ENCODE measurements at regions of chr5 and their contacts with region 1.

Region 1: GRCh38 chr5:80181618-80182211 is 74.1 kb downstream of the SERINC5 start:
- DNase-seq: peak; percentile 92 to 93
- H3K4me3 ChIP-seq: no peak overlapping the region
- H3K4me3 Mint-ChIP-seq: peak overlapping the region; percentile 66
- H3K27ac Mint-ChIP-seq: peak overlapping the region; percentile 92
- H3K4me1 ChIP-seq: peaks cover 76% of the 10 kb centered on the region
- H3K4me1 Mint-ChIP-seq: peaks cover 71% of the 10 kb centered on the region
- H3K27me3 ChIP-seq: no peaks in the 10 kb centered on the region
- H3K27me3 Mint-ChIP-seq: no peaks in the 10 kb centered on the region
- CTCF ChIP-seq: no peak

Region 2: GRCh38 chr5:80083101-80083890 is 98.4 kb before region 1 on chr5:
- CTCF ChIA-PET with region 1: no interaction called
- POLR2A ChIA-PET with region 1: interaction called, 11 read pairs
- intact Hi-C with region 1: no loop called
- DNase-seq: peak in 1 of 2 experiments; percentile 28
- H3K4me3 ChIP-seq: no peak overlapping the region
- H3K4me3 Mint-ChIP-seq: no peak overlapping the region
- H3K27ac Mint-ChIP-seq: no peak overlapping the region
- H3K4me1 ChIP-seq: no peaks in the 10 kb centered on the region
- H3K4me1 Mint-ChIP-seq: no peaks in the 10 kb centered on the region
- H3K27me3 ChIP-seq: no peaks in the 10 kb centered on the region
- H3K27me3 Mint-ChIP-seq: no peaks in the 10 kb centered on the region
- CTCF ChIP-seq: peak; percentile 62 to 68

Region 3: DNA sequence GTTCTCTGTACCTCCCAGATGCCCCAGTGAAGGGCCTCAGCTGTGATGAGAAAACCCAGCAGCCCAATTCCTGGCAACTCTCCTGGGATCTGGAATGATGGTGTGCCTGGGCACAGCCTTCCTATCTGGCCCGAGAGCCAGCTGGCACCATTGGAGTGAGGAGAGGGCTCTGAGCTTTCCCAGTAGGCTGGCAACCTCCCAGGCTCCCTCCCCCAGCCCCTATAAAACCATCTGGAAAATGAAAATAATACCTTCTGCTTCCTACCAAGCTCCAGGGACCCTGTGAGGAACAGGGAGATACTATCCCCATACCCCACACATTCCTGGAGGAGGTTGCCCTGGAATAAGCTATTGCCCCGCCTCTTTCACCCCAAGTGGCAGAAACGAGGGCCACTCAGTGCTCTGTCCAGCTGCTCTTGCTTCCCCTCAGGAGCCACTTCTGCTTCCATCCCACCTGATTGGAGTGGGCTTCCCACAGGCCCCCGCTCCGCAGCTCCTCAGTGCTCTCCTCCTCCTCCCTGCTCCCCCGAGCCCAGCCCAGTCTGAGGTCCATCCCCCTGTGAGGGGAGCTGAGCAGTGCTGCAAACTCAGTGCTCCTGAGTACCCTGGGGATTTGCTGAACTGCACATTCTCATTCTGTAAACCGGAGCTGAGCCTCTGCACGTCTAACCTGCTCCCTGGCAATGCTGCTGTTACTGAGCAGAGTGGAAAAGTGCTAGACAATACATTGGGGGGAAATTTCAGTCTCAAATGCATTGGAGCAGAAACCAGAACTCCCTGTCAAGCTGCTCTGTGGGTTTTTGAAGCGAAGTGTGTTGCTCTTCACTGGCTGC is 71.9 kb before region 1 on chr5:
- CTCF ChIA-PET with region 1: interaction called, 3 read pairs
- POLR2A ChIA-PET with region 1: no interaction called
- intact Hi-C with region 1: loop called (anchors 1 kb)
- DNase-seq: no peak
- H3K4me3 ChIP-seq: no peak overlapping the region
- H3K4me3 Mint-ChIP-seq: peak overlapping the region; percentile 12
- H3K27ac Mint-ChIP-seq: peak overlapping the region; percentile 91
- H3K4me1 ChIP-seq: peaks cover 52% of the 10 kb centered on the region
- H3K4me1 Mint-ChIP-seq: peaks cover 83% of the 10 kb centered on the region
- H3K27me3 ChIP-seq: no peaks in the 10 kb centered on the region
- H3K27me3 Mint-ChIP-seq: no peaks in the 10 kb centered on the region
- CTCF ChIP-seq: no peak

Region 4: GRCh38 chr5:80125962-80126480 is 55.7 kb before region 1 on chr5:
- CTCF ChIA-PET with region 1: no interaction called
- POLR2A ChIA-PET with region 1: no interaction called
- intact Hi-C with region 1: loop called (anchors 1 kb)
- DNase-seq: no peak
- H3K4me3 ChIP-seq: no peak overlapping the region
- H3K4me3 Mint-ChIP-seq: no peak overlapping the region
- H3K27ac Mint-ChIP-seq: peak overlapping the region; percentile 5
- H3K4me1 ChIP-seq: peaks cover 36% of the 10 kb centered on the region
- H3K4me1 Mint-ChIP-seq: peaks cover 31% of the 10 kb centered on the region
- H3K27me3 ChIP-seq: no peaks in the 10 kb centered on the region
- H3K27me3 Mint-ChIP-seq: no peaks in the 10 kb centered on the region
- CTCF ChIP-seq: peak in 1 of 2 experiments; percentile 17

Region 5: GRCh38 chr5:80153586-80154126 is 28.1 kb before region 1 on chr5:
- CTCF ChIA-PET with region 1: no interaction called
- POLR2A ChIA-PET with region 1: interaction called, 13 read pairs
- intact Hi-C with region 1: no loop called
- DNase-seq: no peak
- H3K4me3 ChIP-seq: no peak overlapping the region
- H3K4me3 Mint-ChIP-seq: no peak overlapping the region
- H3K27ac Mint-ChIP-seq: no peak overlapping the region
- H3K4me1 ChIP-seq: peaks cover 16% of the 10 kb centered on the region
- H3K4me1 Mint-ChIP-seq: peaks cover 43% of the 10 kb centered on the region
- H3K27me3 ChIP-seq: no peaks in the 10 kb centered on the region
- H3K27me3 Mint-ChIP-seq: no peaks in the 10 kb centered on the region
- CTCF ChIP-seq: no peak

Region 6: DNA sequence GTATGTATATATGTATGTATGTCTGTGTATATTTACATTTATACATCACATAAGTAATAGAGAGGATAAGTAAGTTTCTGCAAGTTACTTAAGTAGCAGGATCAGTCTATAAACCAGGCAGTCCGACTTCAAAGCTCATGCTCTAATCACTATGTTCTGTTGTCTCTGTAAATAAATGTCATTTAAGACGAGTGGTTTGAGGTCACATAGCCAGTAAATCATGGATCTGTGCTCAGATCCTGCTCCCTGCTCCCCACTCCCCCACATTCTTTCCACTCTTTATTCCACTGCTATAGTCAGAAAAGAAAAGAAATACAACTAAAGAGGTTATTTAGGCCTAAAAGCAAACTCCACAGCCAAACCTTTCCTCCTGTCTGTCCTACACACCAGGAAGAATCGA is 16.3 kb before region 1 on chr5:
- CTCF ChIA-PET with region 1: interaction called, 3 read pairs
- POLR2A ChIA-PET with region 1: interaction called, 4 read pairs
- intact Hi-C with region 1: loop called (anchors 1 kb)
- DNase-seq: peak; percentile 60 to 64
- H3K4me3 ChIP-seq: no peak overlapping the region
- H3K4me3 Mint-ChIP-seq: peak overlapping the region; percentile 27
- H3K27ac Mint-ChIP-seq: peak overlapping the region; percentile 70
- H3K4me1 ChIP-seq: peaks cover 47% of the 10 kb centered on the region
- H3K4me1 Mint-ChIP-seq: peaks cover 66% of the 10 kb centered on the region
- H3K27me3 ChIP-seq: no peaks in the 10 kb centered on the region
- H3K27me3 Mint-ChIP-seq: no peaks in the 10 kb centered on the region
- CTCF ChIP-seq: no peak

Region 7: GRCh38 chr5:80216753-80217596 is 35.3 kb after region 1 on chr5:
- CTCF ChIA-PET with region 1: no interaction called
- POLR2A ChIA-PET with region 1: no interaction called
- intact Hi-C with region 1: no loop called
- DNase-seq: no peak
- H3K4me3 ChIP-seq: no peak overlapping the region
- H3K4me3 Mint-ChIP-seq: no peak overlapping the region
- H3K27ac Mint-ChIP-seq: peak overlapping the region; percentile 76
- H3K4me1 ChIP-seq: peaks cover 11% of the 10 kb centered on the region
- H3K4me1 Mint-ChIP-seq: peaks cover 27% of the 10 kb centered on the region
- H3K27me3 ChIP-seq: no peaks in the 10 kb centered on the region
- H3K27me3 Mint-ChIP-seq: no peaks in the 10 kb centered on the region
- CTCF ChIP-seq: no peak

Region 8: GRCh38 chr5:80255732-80256479 is 74.2 kb after region 1 on chr5 and contains the start of gene SERINC5:
- CTCF ChIA-PET with region 1: interaction called, 3 read pairs
- POLR2A ChIA-PET with region 1: interaction called, 4 read pairs
- intact Hi-C with region 1: loop called (anchors 5 kb)
- DNase-seq: peak; percentile 85
- H3K4me3 ChIP-seq: peak within 1 kb of the TSS; percentile 84
- H3K4me3 Mint-ChIP-seq: peak within 1 kb of the TSS; percentile 91
- H3K27ac Mint-ChIP-seq: peak within 1 kb of the TSS; percentile 86
- H3K4me1 ChIP-seq: peaks cover 44% of the 10 kb centered on the region
- H3K4me1 Mint-ChIP-seq: peaks cover 33% of the 10 kb centered on the region
- H3K27me3 ChIP-seq: no peaks in the 10 kb centered on the region
- H3K27me3 Mint-ChIP-seq: no peaks in the 10 kb centered on the region
- CTCF ChIP-seq: no peak
- total RNA-seq, gene SERINC5: 225 and 226 TPM in 2 replicates

Region 9: GRCh38 chr5:80672140-80672736 is 490.5 kb after region 1 on chr5:
- CTCF ChIA-PET with region 1: no interaction called
- POLR2A ChIA-PET with region 1: no interaction called
- intact Hi-C with region 1: no loop called
- DNase-seq: peak; percentile 76 to 77
- H3K4me3 ChIP-seq: no peak overlapping the region
- H3K4me3 Mint-ChIP-seq: no peak overlapping the region
- H3K27ac Mint-ChIP-seq: no peak overlapping the region
- H3K4me1 ChIP-seq: no peaks in the 10 kb centered on the region
- H3K4me1 Mint-ChIP-seq: no peaks in the 10 kb centered on the region
- H3K27me3 ChIP-seq: no peaks in the 10 kb centered on the region
- H3K27me3 Mint-ChIP-seq: no peaks in the 10 kb centered on the region
- CTCF ChIP-seq: peak; percentile 77 to 87

Measured in Caco-2 (cell line).